ENCODE measurements at regions of chr1 and their contacts with region 1.

Region 1: GRCh38 chr1:234862944-234863515 is 253.1 kb upstream of the IRF2BP2 start:
- DNase-seq: no peak
- ATAC-seq: no peak
- H3K4me3 ChIP-seq: no peak overlapping the region
- H3K27ac ChIP-seq: no peak overlapping the region
- H3K4me1 ChIP-seq: peaks cover 5 to 20% of the 10 kb centered on the region in 2 experiments; a peak in 3 of 4 replicates
- H3K27me3 ChIP-seq: no peaks in the 10 kb centered on the region
- CTCF ChIP-seq: no peak
- POLR2A ChIP-seq: no peak
- RAD21 ChIP-seq: no peak

Region 2: GRCh38 chr1:234599617-234600417 is 263.2 kb before region 1 on chr1:
- CTCF ChIA-PET with region 1: no interaction called
- POLR2A ChIA-PET with region 1: no interaction called
- RAD21 ChIA-PET with region 1: no interaction called
- intact Hi-C with region 1: loop called (anchors 5 kb)
- DNase-seq: peak; percentile 51
- ATAC-seq: peak; percentile 85
- H3K4me3 ChIP-seq: peak overlapping the region; percentile 45 to 55
- H3K27ac ChIP-seq: peak overlapping the region; percentile 69
- H3K4me1 ChIP-seq: peaks cover 55 to 61% of the 10 kb centered on the region in 2 experiments
- H3K27me3 ChIP-seq: no peaks in the 10 kb centered on the region
- CTCF ChIP-seq: no peak
- POLR2A ChIP-seq: peak; percentile 35
- RAD21 ChIP-seq: 0 out of 2 replicates have a peak, but pooled peaks have one; percentile 6

Region 3: GRCh38 chr1:234743791-234744611 is 119.0 kb before region 1 on chr1:
- CTCF ChIA-PET with region 1: no interaction called
- POLR2A ChIA-PET with region 1: no interaction called
- RAD21 ChIA-PET with region 1: no interaction called
- intact Hi-C with region 1: loop called (anchors 10 kb)
- DNase-seq: no peak
- ATAC-seq: no peak
- H3K4me3 ChIP-seq: no peak overlapping the region
- H3K27ac ChIP-seq: no peak overlapping the region
- H3K4me1 ChIP-seq: peaks cover 12 to 19% of the 10 kb centered on the region in 2 experiments
- H3K27me3 ChIP-seq: no peaks in the 10 kb centered on the region; the same call in 1 of the 2 replicates
- CTCF ChIP-seq: no peak
- POLR2A ChIP-seq: no peak
- RAD21 ChIP-seq: no peak

Measured in HCT116 (cell line).